PC-9 (cell line): ENCODE measurements at regions of chr10 and their contacts with region 1.

Region 1: GRCh38 chr10:119725828-119726675 is at the start of gene INPP5F:
- DNase-seq: peak; percentile 79 to 97
- H3K4me3 ChIP-seq: peak within 1 kb of the TSS; percentile 70
- H3K27ac ChIP-seq: peak within 1 kb of the TSS; percentile 62
- H3K4me1 ChIP-seq: peaks cover 20% of the 10 kb centered on the region
- H3K27me3 ChIP-seq: no peaks in the 10 kb centered on the region
- CTCF ChIP-seq: no peak
- total RNA-seq, gene INPP5F: 11.4 and 12.4 TPM in 2 replicates

Region 2: DNA sequence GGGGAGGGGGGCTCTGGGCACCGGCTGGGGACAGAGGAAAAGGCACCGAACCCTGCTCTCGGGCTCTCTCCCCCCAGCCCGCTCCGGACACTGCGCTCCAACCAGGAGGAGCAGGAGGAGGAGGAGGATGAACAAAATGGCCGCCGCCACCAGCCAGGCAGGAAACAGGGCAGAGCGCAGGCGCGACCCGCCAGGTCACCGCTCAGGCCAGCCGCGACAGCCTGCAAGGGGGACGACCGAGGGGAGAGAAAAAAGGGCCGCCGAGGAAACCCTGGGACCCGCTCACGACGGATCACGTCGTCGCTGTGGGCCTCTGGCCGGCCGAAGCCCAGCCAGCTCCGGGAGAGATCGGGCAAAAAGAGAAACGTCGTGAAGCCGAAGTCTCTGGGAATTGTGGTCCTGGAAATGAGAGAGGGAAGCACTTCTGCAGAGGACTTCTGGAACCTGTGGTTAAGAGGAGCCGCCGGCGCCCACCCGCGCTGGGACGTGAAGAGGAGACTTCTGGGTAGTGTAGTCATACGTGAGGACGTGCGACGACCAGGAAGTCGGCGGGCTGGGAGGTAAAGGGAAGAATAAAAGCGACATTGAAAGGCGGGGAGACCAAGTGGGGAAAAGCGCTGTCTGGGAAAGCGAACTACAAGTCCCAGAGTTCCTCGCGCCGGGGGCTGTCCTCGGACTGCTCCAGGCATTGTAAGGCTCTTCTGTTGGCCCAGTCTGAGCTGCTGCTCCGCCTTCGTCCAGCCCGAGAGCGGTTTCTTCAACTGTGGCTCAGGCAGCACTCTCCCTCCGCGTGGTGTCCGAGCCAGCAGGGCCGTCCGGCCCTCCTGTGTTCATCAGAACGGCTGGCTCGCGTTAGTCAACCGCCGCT is 129.3 kb before region 1 on chr10 and contains the start of gene TIAL1:
- CTCF ChIA-PET with region 1: no interaction called
- POLR2A ChIA-PET with region 1: no interaction called
- intact Hi-C with region 1: loop called (anchors 2 kb)
- DNase-seq: peak; percentile 92 to 96
- H3K4me3 ChIP-seq: peak within 1 kb of the TSS; percentile 79
- H3K27ac ChIP-seq: peak within 1 kb of the TSS; percentile 92
- H3K4me1 ChIP-seq: peaks cover 35% of the 10 kb centered on the region
- H3K27me3 ChIP-seq: no peaks in the 10 kb centered on the region
- CTCF ChIP-seq: no peak
- total RNA-seq, gene TIAL1: 81.4 and 94.1 TPM in 2 replicates

Region 3: GRCh38 chr10:119658253-119658673 is 67.8 kb before region 1 on chr10:
- CTCF ChIA-PET with region 1: interaction called, 5 read pairs
- POLR2A ChIA-PET with region 1: no interaction called
- intact Hi-C with region 1: loop called (anchors 2 kb)
- DNase-seq: peak; percentile 67 to 79
- H3K4me3 ChIP-seq: peak overlapping the region; percentile 36; the same call in 1 of the 2 replicates
- H3K27ac ChIP-seq: peak overlapping the region; percentile 76
- H3K4me1 ChIP-seq: peaks cover 96% of the 10 kb centered on the region
- H3K27me3 ChIP-seq: no peaks in the 10 kb centered on the region
- CTCF ChIP-seq: no peak